ENCODE measurements at regions of chr10 and their contacts with region 1.

Region 1: DNA sequence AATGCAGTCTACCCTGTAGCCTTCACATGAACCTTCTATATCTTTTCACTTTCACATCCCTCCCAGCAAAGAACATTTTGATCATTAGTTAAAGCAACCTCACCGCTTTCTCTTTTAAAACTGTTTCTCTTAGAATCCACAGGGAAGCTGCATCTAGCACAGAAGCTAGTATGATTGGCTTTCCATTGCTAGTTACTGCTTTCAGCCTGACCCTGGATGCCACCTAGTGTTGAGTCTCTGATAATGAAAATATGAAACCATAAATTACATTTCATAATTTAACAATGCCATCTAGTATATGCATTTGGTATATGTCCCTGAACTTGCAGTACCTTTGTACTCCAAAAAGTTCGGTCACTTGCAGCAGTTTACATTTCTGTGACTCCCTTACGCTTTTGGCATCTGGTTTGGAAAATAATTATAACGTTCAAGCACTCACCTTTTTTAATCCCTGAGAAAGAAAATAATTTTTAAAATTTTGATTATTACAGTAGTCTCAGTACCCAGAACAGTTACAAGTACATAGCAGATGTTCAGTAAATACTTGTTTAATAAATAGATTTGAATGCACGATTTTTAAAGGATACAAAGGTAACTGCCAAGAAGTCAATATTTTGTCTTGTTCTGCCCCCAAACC is 22.7 kb downstream of the CISD1 start:
- DNase-seq: no peak
- H3K4me3 ChIP-seq: no peak overlapping the region
- H3K27ac ChIP-seq: no peak overlapping the region
- H3K4me1 ChIP-seq: no peaks in the 10 kb centered on the region
- H3K27me3 ChIP-seq: no peaks in the 10 kb centered on the region; a peak in 1 of 7 replicates
- CTCF ChIP-seq: peak in 2 of 3 experiments; percentile 38 to 51; a peak in 2 of 4 replicates
- EP300 ChIP-seq: no peak
- POLR2A ChIP-seq: no peak
- RAD21 ChIP-seq: peak; percentile 70 to 71

Region 2: DNA sequence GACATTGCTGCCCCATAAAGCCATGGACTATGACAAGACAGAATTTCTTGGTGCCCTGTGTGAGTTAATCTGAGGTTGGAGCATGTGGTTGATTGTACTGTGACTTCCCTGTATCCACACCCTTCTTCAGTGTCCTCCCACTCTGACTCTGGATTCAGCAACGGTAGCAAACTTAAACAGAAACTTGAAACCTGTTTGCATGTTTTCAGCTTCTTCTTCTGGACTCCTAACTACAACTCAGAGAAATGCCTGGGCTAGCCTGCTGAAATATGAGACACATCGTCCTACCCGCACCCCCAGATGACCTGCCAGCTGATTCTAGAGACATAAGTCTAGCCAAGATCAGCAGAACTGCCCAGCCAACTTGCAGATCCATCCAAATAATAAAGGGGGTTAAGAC is 102.4 kb before region 1 on chr10:
- CTCF ChIA-PET with region 1: interaction called, 11 read pairs
- POLR2A ChIA-PET with region 1: no interaction called
- DNase-seq: no peak
- H3K4me3 ChIP-seq: no peak overlapping the region
- H3K27ac ChIP-seq: no peak overlapping the region
- H3K4me1 ChIP-seq: no peaks in the 10 kb centered on the region
- H3K27me3 ChIP-seq: no peaks in the 10 kb centered on the region
- CTCF ChIP-seq: no peak
- EP300 ChIP-seq: no peak
- POLR2A ChIP-seq: no peak
- RAD21 ChIP-seq: no peak

Region 3: DNA sequence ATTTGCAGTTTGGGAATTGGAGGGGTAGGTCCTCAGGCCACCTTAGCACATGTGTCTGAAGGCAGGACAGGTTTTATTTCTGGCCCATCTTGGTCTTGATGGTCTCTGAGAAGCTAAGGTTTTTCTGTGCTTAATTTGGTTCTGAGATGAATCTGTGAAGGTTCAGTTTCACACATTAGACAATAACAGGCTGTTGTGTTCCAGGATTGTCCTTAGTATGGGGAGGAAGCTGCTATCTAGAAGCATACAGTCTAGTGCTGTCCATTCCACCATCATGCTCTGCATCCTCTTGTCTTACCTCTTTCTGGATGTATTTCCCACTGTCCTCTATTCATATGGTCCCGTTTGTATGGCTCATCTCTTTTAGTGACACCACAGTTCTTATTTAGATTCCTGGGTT is 50.3 kb after region 1 on chr10:
- CTCF ChIA-PET with region 1: no interaction called
- POLR2A ChIA-PET with region 1: no interaction called
- DNase-seq: no peak
- H3K4me3 ChIP-seq: no peak overlapping the region
- H3K27ac ChIP-seq: no peak overlapping the region
- H3K4me1 ChIP-seq: no peaks in the 10 kb centered on the region; a peak in 1 of 7 replicates
- H3K27me3 ChIP-seq: no peaks in the 10 kb centered on the region
- CTCF ChIP-seq: no peak
- EP300 ChIP-seq: no peak
- POLR2A ChIP-seq: no peak
- RAD21 ChIP-seq: no peak

Region 4: GRCh38 chr10:58414270-58415041 is 122.8 kb after region 1 on chr10:
- CTCF ChIA-PET with region 1: no interaction called
- POLR2A ChIA-PET with region 1: no interaction called
- DNase-seq: no peak
- H3K4me3 ChIP-seq: no peak overlapping the region
- H3K27ac ChIP-seq: no peak overlapping the region
- H3K4me1 ChIP-seq: peaks cover 0 to 6% (median 0%) of the 10 kb centered on the region in 4 experiments; a peak in 2 of 7 replicates
- H3K27me3 ChIP-seq: no peaks in the 10 kb centered on the region
- CTCF ChIP-seq: peak in 2 of 3 experiments; percentile 37 to 42; a peak in 2 of 4 replicates
- EP300 ChIP-seq: no peak
- POLR2A ChIP-seq: no peak
- RAD21 ChIP-seq: peak; percentile 80 to 82